K562 (cell line): ENCODE measurements at regions of chr15 and their contacts with region 1.

Region 1: DNA sequence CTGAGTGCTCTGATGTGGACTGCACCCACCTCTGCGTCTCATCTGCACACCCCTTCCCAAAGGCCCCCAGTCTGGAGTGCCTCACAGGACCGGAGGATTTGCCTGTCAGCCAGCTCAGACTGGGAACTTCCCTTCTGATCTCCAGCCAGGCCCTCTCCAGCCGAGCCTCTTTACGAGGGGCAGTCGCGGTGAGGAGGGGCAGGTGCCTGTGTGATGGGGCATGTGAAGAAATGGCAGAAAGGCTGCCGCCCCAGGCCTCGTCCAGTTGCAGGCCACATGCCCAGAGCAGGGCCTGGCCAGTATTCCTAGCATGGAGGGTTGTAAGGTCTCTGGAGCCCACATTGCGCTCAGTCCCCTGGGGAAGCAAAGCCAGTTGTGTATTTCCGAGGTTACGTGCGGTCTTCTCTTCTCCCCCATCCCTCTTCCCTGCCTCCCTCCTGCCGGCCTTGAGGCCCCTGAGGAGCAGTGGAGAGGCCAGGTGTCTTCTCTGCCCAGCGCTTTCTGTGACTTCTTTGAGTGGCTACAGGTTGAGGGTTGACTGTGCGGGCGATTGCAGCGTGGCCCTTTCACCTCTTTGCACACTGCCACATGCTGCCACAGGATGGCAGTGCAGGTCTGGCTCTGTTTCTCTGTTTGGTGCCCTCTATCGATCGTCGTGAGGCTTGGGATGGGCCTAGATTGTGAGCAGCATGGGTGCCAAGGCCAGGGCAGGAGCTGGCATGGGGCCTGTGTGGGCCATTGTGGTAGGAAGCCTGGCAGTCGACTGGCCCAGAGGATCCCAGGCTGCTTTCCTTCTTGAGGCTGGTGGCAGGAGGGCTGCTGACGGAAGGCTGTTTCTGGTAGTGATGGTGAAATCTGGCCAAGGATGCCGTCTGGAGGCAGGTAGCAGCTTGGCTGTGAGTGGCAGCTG is 5.3 kb downstream of the CLK3 start:
- DNase-seq: peak; percentile 53 to 73 (median 64)
- ATAC-seq: peak; percentile 87
- H3K4me3 ChIP-seq: no peak overlapping the region
- H3K27ac ChIP-seq: no peak overlapping the region
- H3K4me1 ChIP-seq: peaks cover 15 to 30% of the 10 kb centered on the region in 2 experiments; a peak in 4 of 5 replicates
- H3K27me3 ChIP-seq: no peaks in the 10 kb centered on the region
- CTCF ChIP-seq: peak; percentile 94 to 99 (median 99)
- EP300 ChIP-seq: no peak
- POLR2A ChIP-seq: no peak
- RAD21 ChIP-seq: peak; percentile 15 to 62; a peak in 2 of 4 replicates

Region 2: DNA sequence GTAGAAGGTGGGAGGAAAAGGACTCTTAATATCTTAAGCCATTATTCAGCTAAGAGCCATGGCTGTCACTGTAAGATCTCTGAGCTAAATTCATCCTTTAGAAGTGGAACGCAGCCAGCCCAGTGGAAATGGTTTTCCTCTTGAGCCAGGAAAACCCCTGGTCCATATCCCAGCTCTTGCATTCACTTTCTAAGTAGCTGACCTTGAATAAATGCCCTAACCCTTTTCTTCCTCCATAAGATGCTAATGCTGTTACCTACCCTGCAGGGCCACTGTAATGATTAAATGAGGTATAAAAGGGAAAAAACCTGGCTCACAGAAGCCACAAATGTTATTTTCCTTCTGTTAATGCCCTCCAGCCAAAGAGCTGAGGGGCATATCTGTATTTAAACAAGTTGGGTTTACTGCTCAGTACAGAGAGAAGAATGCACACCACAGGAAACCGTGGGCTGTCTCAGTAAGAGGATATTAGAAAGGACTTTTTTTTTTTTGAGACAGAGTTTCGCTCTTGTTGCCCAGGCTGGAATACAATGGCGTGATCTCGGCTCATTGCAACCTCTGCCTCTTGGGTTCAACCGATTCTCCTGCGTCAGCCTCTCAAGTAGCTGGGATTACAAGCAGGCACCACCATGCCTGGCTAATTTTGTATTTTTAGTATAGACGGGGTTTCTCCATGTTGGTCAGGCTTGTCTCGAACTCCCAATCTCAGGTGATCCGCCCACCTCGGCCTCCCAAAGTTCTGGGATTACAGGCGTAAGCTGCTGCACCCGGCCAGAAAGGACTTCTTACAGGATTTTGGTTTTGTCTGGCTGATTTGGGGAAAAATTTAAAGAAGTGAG is 166.7 kb before region 1 on chr15:
- CTCF ChIA-PET with region 1: no interaction called
- POLR2A ChIA-PET with region 1: no interaction called
- in situ Hi-C with region 1: loop called (anchors 5 kb)
- intact Hi-C with region 1: no loop called
- DNase-seq: no peak
- ATAC-seq: no peak
- H3K4me3 ChIP-seq: no peak overlapping the region
- H3K27ac ChIP-seq: no peak overlapping the region
- H3K4me1 ChIP-seq: peaks cover under 1 to 2% of the 10 kb centered on the region in 2 experiments; a peak in 2 of 5 replicates
- H3K27me3 ChIP-seq: no peaks in the 10 kb centered on the region
- CTCF ChIP-seq: no peak
- EP300 ChIP-seq: no peak
- POLR2A ChIP-seq: no peak
- RAD21 ChIP-seq: no peak

Region 3: DNA sequence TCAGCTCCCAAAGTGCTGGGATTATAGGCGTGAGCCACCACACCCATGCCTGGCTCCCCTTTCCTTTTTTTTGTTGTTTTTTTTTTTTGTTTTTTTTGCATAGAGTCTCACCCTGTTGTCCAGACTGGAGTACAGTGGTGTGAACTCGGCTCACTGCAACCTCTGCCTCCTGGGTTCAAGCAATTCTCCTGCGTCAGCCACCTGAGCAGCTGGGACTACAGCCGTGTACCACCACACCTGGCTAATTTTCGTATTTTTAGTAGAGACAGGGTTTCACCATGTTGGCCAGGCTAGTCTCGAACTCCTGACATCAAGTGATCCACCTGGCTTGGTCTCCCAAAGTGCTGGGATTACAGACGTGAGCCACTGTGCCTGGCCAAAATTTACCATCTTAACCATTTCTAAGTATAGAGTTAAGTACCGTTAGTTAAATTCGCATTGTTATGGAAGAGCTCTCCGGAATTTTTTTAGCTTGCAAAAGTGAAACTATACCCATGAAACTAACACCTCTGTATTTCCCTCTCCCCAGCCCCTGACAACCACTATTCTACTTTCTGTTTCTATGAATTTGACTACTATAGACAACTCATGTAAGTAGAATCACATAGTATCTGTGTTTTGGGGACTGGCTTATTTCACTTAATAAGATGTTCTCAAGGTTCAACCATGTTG is 509.8 kb after region 1 on chr15:
- CTCF ChIA-PET with region 1: no interaction called
- POLR2A ChIA-PET with region 1: no interaction called
- in situ Hi-C with region 1: no loop called
- intact Hi-C with region 1: no loop called
- DNase-seq: no peak
- ATAC-seq: no peak
- H3K4me3 ChIP-seq: no peak overlapping the region
- H3K27ac ChIP-seq: no peak overlapping the region
- H3K4me1 ChIP-seq: peaks cover 4 to 7% of the 10 kb centered on the region in 2 experiments; a peak in 2 of 5 replicates
- H3K27me3 ChIP-seq: no peaks in the 10 kb centered on the region
- CTCF ChIP-seq: no peak
- EP300 ChIP-seq: no peak
- POLR2A ChIP-seq: no peak
- RAD21 ChIP-seq: no peak